Naive thymus-derived CD4-positive, alpha-beta T cell (primary cell): ENCODE measurements at regions of chr11 and their contacts with region 1.

Region 1: GRCh38 chr11:3109921-3110706 is 52.9 kb upstream of the CARS1 start:
- DNase-seq: peak in 7 of 9 donors; percentile 6 to 43 (median 30)
- ATAC-seq: peak; percentile 83
- H3K4me3 ChIP-seq: no peak overlapping the region
- H3K4me3 Mint-ChIP-seq: no peak overlapping the region
- H3K27ac ChIP-seq: no peak overlapping the region
- H3K27ac Mint-ChIP-seq: no peak overlapping the region
- H3K4me1 ChIP-seq: peaks cover 0 to 7% of the 10 kb centered on the region in 2 donors
- H3K4me1 Mint-ChIP-seq: peaks cover 0 to 18% (median 0%) of the 10 kb centered on the region in 7 donors
- H3K27me3 ChIP-seq: no peaks in the 10 kb centered on the region
- H3K27me3 Mint-ChIP-seq: no peaks in the 10 kb centered on the region

Region 2: GRCh38 chr11:3217676-3218482 is 107.8 kb after region 1 on chr11:
- CTCF ChIA-PET with region 1: no interaction called
- POLR2A ChIA-PET with region 1: no interaction called
- intact Hi-C with region 1: loop called in 1 of 2 experiments (anchors 1 kb)
- DNase-seq: no peak
- ATAC-seq: no peak
- H3K4me3 ChIP-seq: no peak overlapping the region
- H3K4me3 Mint-ChIP-seq: no peak overlapping the region
- H3K27ac ChIP-seq: no peak overlapping the region
- H3K27ac Mint-ChIP-seq: no peak overlapping the region
- H3K4me1 ChIP-seq: peaks cover 0 to 3% of the 10 kb centered on the region in 2 donors
- H3K4me1 Mint-ChIP-seq: peaks cover 4 to 11% (median 7%) of the 10 kb centered on the region in 7 donors
- H3K27me3 ChIP-seq: no peaks in the 10 kb centered on the region
- H3K27me3 Mint-ChIP-seq: peaks cover 7 to 30% (median 14%) of the 10 kb centered on the region in 5 donors